Breast epithelium (tissue), 4 donors: ENCODE measurements at regions of chr15 and their contacts with region 1.

Region 1: DNA sequence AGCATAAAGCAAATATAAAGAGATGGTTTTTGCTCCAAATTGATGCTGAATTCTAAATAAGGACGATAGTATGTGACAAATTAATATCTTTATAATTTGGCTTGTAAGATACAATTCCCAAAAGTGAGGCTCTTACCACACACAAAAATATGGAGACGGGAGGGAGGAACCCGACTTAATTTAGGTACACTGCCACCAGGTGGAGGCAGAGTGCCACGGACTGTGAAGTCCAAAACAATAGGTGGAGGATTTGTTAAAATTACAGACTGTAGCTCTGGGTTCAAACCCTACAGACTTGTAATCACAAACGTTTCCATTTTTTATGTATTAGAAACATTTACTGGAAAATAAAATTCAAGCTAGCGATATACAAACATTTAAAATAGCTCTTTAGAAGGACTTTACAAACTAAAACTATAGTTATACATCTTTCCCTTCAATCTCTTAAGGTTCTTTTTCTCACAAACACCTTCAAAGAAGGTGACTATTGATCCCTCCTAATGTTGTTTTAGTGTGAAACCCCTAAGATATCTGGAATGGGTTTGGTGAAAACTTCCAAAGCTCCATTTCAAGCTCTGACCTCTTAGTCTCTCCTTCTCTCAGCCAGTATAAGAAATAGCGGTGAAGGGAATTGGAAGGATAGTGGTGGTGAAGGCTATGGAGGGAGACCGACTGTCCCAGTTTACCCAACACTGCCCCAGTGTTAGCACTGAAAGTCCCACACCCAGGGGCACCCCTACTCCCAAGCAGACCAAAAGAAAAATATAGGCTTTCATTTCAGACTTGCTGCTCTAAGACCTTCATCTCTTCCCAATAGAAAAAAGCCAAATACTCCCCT is 89.7 kb downstream of the AQP9 start:
- DNase-seq: peak; percentile 46 to 62
- H3K4me3 ChIP-seq: no peak overlapping the region
- H3K27ac ChIP-seq: peak overlapping the region in 1 of 2 donors; percentile 61
- H3K4me1 ChIP-seq: peaks cover 3 to 9% of the 10 kb centered on the region in 2 donors
- H3K27me3 ChIP-seq: no peaks in the 10 kb centered on the region
- CTCF ChIP-seq: peak; percentile 79 to 83 (median 82)
- POLR2A ChIP-seq: no peak

Region 2: GRCh38 chr15:58933281-58934113 is 705.6 kb after region 1 on chr15 and contains the start of gene SLTM:
- intact Hi-C with region 1: loop called (anchors 10 kb)
- DNase-seq: peak; percentile 87 to 90
- H3K4me3 ChIP-seq: peak within 1 kb of the TSS; percentile 76 to 91 (median 88)
- H3K27ac ChIP-seq: peak within 1 kb of the TSS; percentile 92 to 99
- H3K4me1 ChIP-seq: no peaks in the 10 kb centered on the region
- H3K27me3 ChIP-seq: no peaks in the 10 kb centered on the region
- CTCF ChIP-seq: peak; percentile 15 to 50 (median 41)
- POLR2A ChIP-seq: peak; percentile 85
- total RNA-seq, gene SLTM: 102 to 195 (median 163) TPM